PC-3 (cell line): ENCODE measurements at regions of chr1 and their contacts with region 1.

Region 1: DNA sequence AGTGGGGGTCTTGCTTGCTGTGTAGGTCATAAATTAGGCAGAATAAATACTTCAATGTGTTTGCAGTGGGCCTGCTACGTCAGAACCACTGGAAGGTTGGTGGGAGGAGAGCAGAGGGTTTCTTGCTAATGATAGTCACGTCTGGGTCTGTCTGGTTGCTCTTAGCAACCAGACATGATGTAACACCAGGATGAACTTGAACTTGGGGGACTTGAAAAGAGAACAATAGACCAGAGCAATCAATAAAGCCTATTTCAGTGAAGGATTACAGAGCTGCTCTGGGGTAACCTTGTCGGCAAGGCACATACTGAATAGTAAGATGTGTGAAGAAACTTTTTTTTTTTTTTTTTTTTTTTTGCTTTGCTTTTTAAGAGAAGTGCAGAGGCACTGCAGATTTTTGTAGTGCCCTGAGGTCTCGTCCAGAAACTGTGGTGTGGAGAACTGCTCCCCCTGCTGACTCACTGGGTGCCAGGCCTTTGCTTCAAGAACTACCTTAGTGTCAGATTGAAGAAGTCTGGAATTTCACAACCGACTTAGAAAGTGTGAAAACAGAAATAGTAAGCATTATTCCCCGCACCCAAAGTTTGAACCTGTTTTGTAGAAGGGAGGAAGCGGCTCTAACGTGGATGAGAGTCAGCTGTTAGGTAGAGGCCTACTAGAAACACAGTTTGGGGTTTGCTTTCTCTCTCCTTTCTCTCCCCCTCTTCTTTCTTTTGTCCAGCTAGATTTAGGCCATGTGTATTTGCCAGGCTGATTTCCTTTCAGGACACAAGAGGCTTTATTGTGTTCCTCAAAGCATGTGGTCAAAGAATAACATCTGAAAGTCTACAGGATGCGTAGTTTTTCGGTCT is 271.6 kb downstream of the TM2D1 start:
- DNase-seq: peak; percentile 83
- ATAC-seq: peak; percentile 96
- H3K4me3 ChIP-seq: no peak overlapping the region
- H3K27ac ChIP-seq: no peak overlapping the region
- H3K4me1 ChIP-seq: peaks cover 35% of the 10 kb centered on the region
- H3K27me3 ChIP-seq: no peaks in the 10 kb centered on the region
- CTCF ChIP-seq: peak; percentile 86

Region 2: GRCh38 chr1:60978421-60979357 is 474.6 kb before region 1 on chr1:
- CTCF ChIA-PET with region 1: no interaction called
- POLR2A ChIA-PET with region 1: interaction called, 3 read pairs
- intact Hi-C with region 1: loop called (anchors 1 kb)
- DNase-seq: peak; percentile 64
- ATAC-seq: peak; percentile 94
- H3K4me3 ChIP-seq: no peak overlapping the region
- H3K27ac ChIP-seq: no peak overlapping the region
- H3K4me1 ChIP-seq: no peaks in the 10 kb centered on the region
- H3K27me3 ChIP-seq: no peaks in the 10 kb centered on the region
- CTCF ChIP-seq: peak; percentile 93

Region 3: GRCh38 chr1:61210435-61211154 is 242.7 kb before region 1 on chr1:
- CTCF ChIA-PET with region 1: no interaction called
- POLR2A ChIA-PET with region 1: no interaction called
- intact Hi-C with region 1: loop called (anchors 10 kb)
- DNase-seq: peak; percentile 15
- ATAC-seq: peak; percentile 58
- H3K4me3 ChIP-seq: no peak overlapping the region
- H3K27ac ChIP-seq: no peak overlapping the region
- H3K4me1 ChIP-seq: no peaks in the 10 kb centered on the region
- H3K27me3 ChIP-seq: no peaks in the 10 kb centered on the region
- CTCF ChIP-seq: peak; percentile 41; the same call in 1 of the 2 replicates

Region 4: DNA sequence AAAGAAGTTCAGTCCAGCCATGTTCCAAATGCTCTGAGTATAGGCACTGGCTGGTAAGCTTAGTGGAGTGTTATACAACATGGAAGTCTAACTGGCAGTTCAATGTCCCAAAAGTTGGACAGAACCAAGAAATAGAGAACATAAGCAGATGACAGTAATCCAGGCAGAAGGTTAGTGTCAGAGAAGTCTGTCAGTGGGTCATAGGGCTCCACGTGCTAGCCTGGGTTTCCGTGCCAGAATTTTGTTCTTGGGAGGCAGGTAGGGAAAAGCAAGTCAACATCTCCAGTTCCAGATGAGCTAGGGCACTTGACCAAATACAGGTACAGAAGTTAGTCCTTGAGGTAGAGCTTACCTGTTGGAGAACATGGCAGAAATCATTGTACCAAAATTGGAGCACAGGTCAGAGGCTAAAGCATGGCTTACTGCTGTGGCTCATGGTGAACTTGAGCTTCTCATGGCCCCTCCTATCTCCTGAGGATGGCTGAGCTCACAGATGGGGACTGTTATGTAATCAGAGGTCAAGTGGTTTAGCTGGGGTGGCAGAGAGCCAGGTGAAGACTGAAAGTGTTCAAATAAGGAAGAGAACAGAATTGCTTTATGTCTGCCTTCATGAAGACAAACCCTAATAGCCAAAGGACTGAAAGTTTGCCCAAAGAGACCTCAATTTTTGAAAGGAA is 200.1 kb before region 1 on chr1:
- CTCF ChIA-PET with region 1: no interaction called
- POLR2A ChIA-PET with region 1: no interaction called
- intact Hi-C with region 1: no loop called
- DNase-seq: peak; percentile 26
- ATAC-seq: no peak
- H3K4me3 ChIP-seq: no peak overlapping the region
- H3K27ac ChIP-seq: no peak overlapping the region
- H3K4me1 ChIP-seq: peaks cover 21% of the 10 kb centered on the region
- H3K27me3 ChIP-seq: no peaks in the 10 kb centered on the region
- CTCF ChIP-seq: no peak

Region 5: DNA sequence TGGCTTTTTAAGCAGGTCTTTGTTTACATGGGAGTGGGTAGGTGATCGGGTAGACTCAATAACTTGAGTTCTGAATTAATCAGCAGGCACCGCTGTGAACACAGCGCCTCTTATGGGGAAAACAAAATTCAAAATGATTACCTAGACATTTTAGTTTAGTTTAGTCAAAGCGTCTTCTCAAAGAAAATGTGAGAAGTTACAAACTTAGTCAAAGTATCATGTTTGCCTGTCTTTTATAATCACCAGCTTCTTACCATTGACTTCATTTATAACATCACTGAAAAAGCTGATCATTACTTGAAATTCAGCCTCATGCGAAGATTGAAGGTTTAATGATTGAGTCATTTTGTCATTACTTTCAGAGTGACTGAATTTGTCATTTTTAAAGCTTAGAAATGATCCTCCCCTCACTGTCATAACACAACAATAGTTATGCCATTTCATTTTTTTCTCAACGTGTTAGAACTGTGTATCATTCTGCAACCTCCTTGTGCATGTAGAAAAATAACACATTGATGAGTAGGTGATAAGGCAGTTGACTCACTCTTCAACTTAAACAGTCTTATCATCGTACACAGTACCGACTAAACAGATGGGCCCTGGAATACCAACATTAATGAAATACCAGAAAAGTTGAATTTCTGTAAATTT is 182.4 kb before region 1 on chr1:
- CTCF ChIA-PET with region 1: no interaction called
- POLR2A ChIA-PET with region 1: no interaction called
- intact Hi-C with region 1: no loop called
- DNase-seq: no peak
- ATAC-seq: no peak
- H3K4me3 ChIP-seq: no peak overlapping the region
- H3K27ac ChIP-seq: no peak overlapping the region
- H3K4me1 ChIP-seq: 0 out of 2 replicates have a peak, but pooled peaks cover 3% of the 10 kb centered on the region
- H3K27me3 ChIP-seq: no peaks in the 10 kb centered on the region
- CTCF ChIP-seq: no peak

Region 6: GRCh38 chr1:61356995-61357394 is 96.3 kb before region 1 on chr1:
- CTCF ChIA-PET with region 1: no interaction called
- POLR2A ChIA-PET with region 1: no interaction called
- intact Hi-C with region 1: loop called (anchors 5 kb)
- DNase-seq: no peak
- ATAC-seq: no peak
- H3K4me3 ChIP-seq: no peak overlapping the region
- H3K27ac ChIP-seq: no peak overlapping the region
- H3K4me1 ChIP-seq: peaks cover 10% of the 10 kb centered on the region; the same call in 1 of the 2 replicates
- H3K27me3 ChIP-seq: no peaks in the 10 kb centered on the region
- CTCF ChIP-seq: no peak

Region 7: GRCh38 chr1:61588736-61589672 is 135.7 kb after region 1 on chr1:
- CTCF ChIA-PET with region 1: no interaction called
- POLR2A ChIA-PET with region 1: no interaction called
- intact Hi-C with region 1: loop called (anchors 2 kb)
- DNase-seq: peak; percentile 88
- ATAC-seq: peak; percentile 98
- H3K4me3 ChIP-seq: no peak overlapping the region
- H3K27ac ChIP-seq: no peak overlapping the region
- H3K4me1 ChIP-seq: peaks cover 12% of the 10 kb centered on the region; the same call in 1 of the 2 replicates
- H3K27me3 ChIP-seq: no peaks in the 10 kb centered on the region
- CTCF ChIP-seq: peak; percentile 96